ENCODE measurements at regions of chr7 and their contacts with region 1.

Region 1: DNA sequence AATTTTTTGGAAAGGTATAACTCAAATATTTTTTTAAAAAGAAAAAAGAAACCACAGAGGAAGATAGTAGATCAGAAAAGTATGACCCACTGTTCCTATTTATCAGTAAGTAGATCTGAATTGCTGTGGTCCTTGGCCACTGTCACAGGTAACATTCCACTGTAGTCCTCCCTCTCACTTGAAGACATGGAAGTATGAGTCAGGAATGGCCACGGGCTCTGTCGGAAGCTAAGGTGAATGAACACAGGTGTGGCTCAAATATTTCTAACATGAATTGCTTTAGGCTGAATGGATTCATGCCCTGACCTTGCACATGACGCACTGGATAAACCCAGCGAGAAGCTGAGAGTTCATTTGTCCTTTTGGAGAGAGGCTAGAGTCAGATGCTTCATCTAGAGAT is 224.4 kb upstream of the SP8 start:
- DNase-seq: peak; percentile 91
- H3K4me3 Mint-ChIP-seq: peak overlapping the region; percentile 9
- H3K27ac Mint-ChIP-seq: peak overlapping the region; percentile 75
- H3K4me1 Mint-ChIP-seq: peaks cover 23% of the 10 kb centered on the region
- H3K27me3 Mint-ChIP-seq: no peaks in the 10 kb centered on the region
- CTCF ChIP-seq: no peak

Region 2: DNA sequence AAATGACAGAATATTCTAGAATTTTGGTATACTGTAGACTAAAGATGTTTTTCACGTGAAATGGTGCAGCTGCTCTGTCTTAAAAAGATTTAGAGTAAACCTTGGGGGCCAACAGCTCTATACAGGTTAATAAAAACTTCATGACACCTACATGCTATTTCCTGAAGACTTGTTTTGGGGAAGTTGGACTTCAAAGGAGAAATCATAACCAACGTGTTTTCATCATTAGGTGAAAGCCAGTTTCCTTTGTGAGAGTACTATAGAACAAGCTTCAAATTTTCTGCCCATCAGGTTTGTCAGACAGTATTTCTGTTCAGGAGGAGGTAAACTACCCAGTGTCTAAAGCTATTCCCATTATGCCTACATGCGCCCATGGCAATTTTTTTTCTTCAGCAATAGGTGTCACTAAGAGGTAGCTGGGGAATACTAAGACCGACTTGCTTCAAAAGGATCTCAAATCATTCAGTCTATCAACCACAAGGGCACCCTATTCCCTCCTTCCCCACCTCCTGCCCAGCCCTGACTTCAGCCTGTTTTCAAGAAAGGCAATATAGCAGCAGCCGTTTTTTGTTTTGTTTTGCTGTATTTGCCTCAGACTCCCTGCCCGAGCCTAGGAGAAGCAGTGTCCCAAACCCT is 12.8 kb after region 1 on chr7:
- CTCF ChIA-PET with region 1: interaction called, 5 read pairs
- POLR2A ChIA-PET with region 1: interaction called, 10 read pairs
- intact Hi-C with region 1: no loop called
- DNase-seq: no peak
- H3K4me3 Mint-ChIP-seq: no peak overlapping the region
- H3K27ac Mint-ChIP-seq: no peak overlapping the region
- H3K4me1 Mint-ChIP-seq: no peaks in the 10 kb centered on the region
- H3K27me3 Mint-ChIP-seq: no peaks in the 10 kb centered on the region
- CTCF ChIP-seq: no peak

Region 3: GRCh38 chr7:21071561-21072501 is 60.7 kb after region 1 on chr7:
- CTCF ChIA-PET with region 1: no interaction called
- POLR2A ChIA-PET with region 1: no interaction called
- intact Hi-C with region 1: no loop called
- DNase-seq: no peak
- H3K4me3 Mint-ChIP-seq: no peak overlapping the region
- H3K27ac Mint-ChIP-seq: no peak overlapping the region
- H3K4me1 Mint-ChIP-seq: peaks cover 6% of the 10 kb centered on the region
- H3K27me3 Mint-ChIP-seq: no peaks in the 10 kb centered on the region
- CTCF ChIP-seq: no peak

Region 4: DNA sequence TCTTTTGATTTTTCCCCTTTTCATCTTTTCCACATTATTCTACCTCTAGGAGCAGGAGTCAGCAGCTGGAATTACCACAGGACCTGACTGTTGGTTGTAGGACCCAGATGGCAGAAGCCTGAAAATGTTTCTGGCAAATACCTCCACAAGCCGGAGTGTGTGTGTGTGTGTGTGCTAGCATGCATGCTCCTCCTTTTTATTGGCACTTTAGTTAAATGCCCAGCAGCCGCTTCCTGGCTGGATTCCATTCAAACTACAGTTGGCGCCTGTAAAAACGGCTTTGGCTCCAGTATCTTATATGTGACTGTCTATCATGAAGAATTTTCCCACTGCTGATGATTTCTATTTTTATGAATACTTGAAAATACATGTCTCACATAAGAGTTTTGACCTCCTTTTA is 97.1 kb after region 1 on chr7:
- CTCF ChIA-PET with region 1: no interaction called
- POLR2A ChIA-PET with region 1: interaction called, 3 read pairs
- intact Hi-C with region 1: loop called (anchors 5 kb)
- DNase-seq: no peak
- H3K4me3 Mint-ChIP-seq: no peak overlapping the region
- H3K27ac Mint-ChIP-seq: no peak overlapping the region
- H3K4me1 Mint-ChIP-seq: peaks cover 33% of the 10 kb centered on the region
- H3K27me3 Mint-ChIP-seq: no peaks in the 10 kb centered on the region
- CTCF ChIP-seq: no peak

Measured in MCF 10A (cell line).